Calu3 (cell line): ENCODE measurements at regions of chr4 and their contacts with region 1.

Region 1: GRCh38 chr4:89196056-89196674 is 84.8 kb downstream of the TIGD2 start:
- DNase-seq: peak; percentile 1
- H3K4me3 Mint-ChIP-seq: no peak overlapping the region
- H3K27ac Mint-ChIP-seq: peak overlapping the region; percentile 58
- H3K4me1 Mint-ChIP-seq: peaks cover 26% of the 10 kb centered on the region
- H3K27me3 Mint-ChIP-seq: no peaks in the 10 kb centered on the region
- CTCF ChIP-seq: no peak

Region 2: GRCh38 chr4:89164400-89164799 is 31.8 kb before region 1 on chr4:
- CTCF ChIA-PET with region 1: no interaction called
- intact Hi-C with region 1: loop called (anchors 2 kb)
- DNase-seq: no peak
- H3K4me3 Mint-ChIP-seq: no peak overlapping the region
- H3K27ac Mint-ChIP-seq: no peak overlapping the region
- H3K4me1 Mint-ChIP-seq: no peaks in the 10 kb centered on the region
- H3K27me3 Mint-ChIP-seq: no peaks in the 10 kb centered on the region
- CTCF ChIP-seq: no peak